B cell (primary cell): ENCODE measurements at regions of chr19 and their contacts with region 1.

Region 1: DNA sequence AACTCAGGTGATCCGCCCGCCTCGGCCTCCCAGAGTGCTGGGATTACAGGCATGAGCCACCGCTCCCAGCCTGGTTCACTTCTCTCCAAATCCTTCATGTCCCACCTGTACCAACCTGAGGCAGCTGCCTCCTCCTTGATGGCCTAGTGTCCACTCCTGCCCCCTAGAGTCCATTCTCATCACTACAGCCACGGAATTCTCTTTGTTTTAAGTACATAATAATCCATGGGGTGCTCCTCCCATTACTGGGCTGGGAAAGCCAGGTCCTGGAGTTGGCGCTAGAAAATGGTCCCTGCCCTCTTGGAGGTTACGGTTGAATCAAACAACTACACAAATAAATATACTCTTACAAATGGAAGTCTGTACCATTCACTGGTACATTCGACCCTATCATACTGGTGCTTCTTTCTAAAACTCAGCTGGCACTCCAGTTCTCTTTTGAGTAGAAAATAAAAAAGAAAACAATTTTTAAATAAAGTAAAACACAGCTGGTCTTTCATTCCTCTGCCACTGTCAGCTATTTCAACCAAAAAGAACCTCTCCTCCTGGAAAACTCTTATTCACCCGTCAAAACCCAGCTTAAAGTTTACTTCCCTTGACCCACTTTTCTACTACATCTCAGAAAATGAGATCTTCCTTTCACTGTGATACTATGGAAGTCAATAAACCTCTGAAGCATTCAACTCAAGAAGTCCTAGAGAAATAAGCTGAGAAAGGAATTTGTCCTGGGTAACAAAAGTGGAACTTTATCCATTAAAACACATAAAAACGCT is 22.4 kb upstream of the ARHGEF18 start:
- DNase-seq: peak; percentile 51
- ATAC-seq: no peak
- H3K4me3 ChIP-seq: no peak overlapping the region
- H3K4me3 Mint-ChIP-seq: no peak overlapping the region
- H3K27ac ChIP-seq: no peak overlapping the region
- H3K27ac Mint-ChIP-seq: no peak overlapping the region
- H3K4me1 ChIP-seq: peaks cover 8% of the 10 kb centered on the region in 2 donors
- H3K4me1 Mint-ChIP-seq: peaks cover 5% of the 10 kb centered on the region
- H3K27me3 ChIP-seq: no peaks in the 10 kb centered on the region
- H3K27me3 Mint-ChIP-seq: no peaks in the 10 kb centered on the region
- CTCF ChIP-seq: peak; percentile 22

Region 2: DNA sequence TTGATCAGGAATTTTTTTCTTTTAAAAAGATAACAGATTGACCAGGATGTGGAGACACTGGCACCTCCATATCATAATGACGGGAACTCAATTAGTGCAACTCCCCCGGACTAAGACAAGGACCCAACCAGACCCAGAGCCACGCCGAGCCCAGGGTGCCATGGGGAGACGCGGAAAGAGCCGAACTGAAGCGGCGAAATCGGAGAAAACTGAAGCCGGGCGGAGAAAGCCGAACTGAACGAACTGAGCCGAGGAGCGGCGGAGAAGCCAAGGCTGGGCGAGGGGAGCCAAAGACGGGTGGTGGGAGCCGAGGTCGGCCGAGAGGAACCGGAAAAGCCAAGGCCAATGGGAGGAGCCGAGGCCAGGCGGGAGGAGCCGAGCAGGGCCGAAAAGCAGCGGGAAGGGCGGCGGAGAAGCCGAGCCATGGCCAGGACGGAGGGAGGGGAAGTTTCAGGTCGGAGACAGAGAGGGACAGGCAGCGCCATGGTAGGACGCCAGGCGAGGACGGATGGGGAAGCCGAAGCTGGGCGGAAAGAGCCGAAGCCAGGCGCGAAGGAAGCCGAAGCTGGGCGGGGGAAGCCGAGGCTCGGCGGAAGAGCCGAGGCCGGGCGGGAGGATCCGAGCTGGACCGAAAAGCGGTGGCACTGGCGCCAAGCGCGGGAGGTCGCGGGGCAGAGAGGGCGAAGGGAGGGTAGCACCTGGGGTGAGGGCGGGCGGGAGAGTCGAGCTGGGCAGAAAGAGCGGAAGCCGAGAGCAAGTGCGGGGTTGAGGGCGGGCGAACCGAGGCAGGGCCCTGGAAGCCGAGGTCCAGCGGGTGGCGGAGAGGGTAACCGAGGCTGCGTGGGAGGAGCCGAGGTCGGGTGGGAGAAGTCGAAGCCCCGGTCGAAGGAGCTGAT is 227.3 kb before region 1 on chr19:
- CTCF ChIA-PET with region 1: interaction called, 15 read pairs
- POLR2A ChIA-PET with region 1: no interaction called
- intact Hi-C with region 1: no loop called
- DNase-seq: peak; percentile 91
- ATAC-seq: peak; percentile 91
- H3K4me3 ChIP-seq: peak overlapping the region; percentile 46 to 87 (median 82)
- H3K4me3 Mint-ChIP-seq: peak overlapping the region; percentile 93
- H3K27ac ChIP-seq: peak overlapping the region; percentile 76 to 93
- H3K27ac Mint-ChIP-seq: peak overlapping the region; percentile 90
- H3K4me1 ChIP-seq: peaks cover 10 to 14% of the 10 kb centered on the region in 2 donors
- H3K4me1 Mint-ChIP-seq: peaks cover 23% of the 10 kb centered on the region
- H3K27me3 ChIP-seq: no peaks in the 10 kb centered on the region
- H3K27me3 Mint-ChIP-seq: no peaks in the 10 kb centered on the region
- CTCF ChIP-seq: no peak

Region 3: GRCh38 chr19:7348587-7349230 is 22.4 kb after region 1 on chr19 and contains the start of gene ARHGEF18:
- CTCF ChIA-PET with region 1: interaction called, 52 read pairs
- POLR2A ChIA-PET with region 1: interaction called, 5 read pairs
- intact Hi-C with region 1: no loop called
- DNase-seq: peak; percentile 89
- ATAC-seq: peak; percentile 41
- H3K4me3 ChIP-seq: peak within 1 kb of the TSS; percentile 66 to 100 (median 97)
- H3K4me3 Mint-ChIP-seq: peak within 1 kb of the TSS; percentile 99
- H3K27ac ChIP-seq: peak within 1 kb of the TSS; percentile 96 to 99
- H3K27ac Mint-ChIP-seq: peak within 1 kb of the TSS; percentile 97
- H3K4me1 ChIP-seq: peaks cover 61 to 80% of the 10 kb centered on the region in 2 donors
- H3K4me1 Mint-ChIP-seq: peaks cover 79% of the 10 kb centered on the region
- H3K27me3 ChIP-seq: no peaks in the 10 kb centered on the region
- H3K27me3 Mint-ChIP-seq: no peaks in the 10 kb centered on the region
- CTCF ChIP-seq: no peak
- total RNA-seq, gene ARHGEF18: 86.8 and 94.9 TPM in 2 replicates

Region 4: DNA sequence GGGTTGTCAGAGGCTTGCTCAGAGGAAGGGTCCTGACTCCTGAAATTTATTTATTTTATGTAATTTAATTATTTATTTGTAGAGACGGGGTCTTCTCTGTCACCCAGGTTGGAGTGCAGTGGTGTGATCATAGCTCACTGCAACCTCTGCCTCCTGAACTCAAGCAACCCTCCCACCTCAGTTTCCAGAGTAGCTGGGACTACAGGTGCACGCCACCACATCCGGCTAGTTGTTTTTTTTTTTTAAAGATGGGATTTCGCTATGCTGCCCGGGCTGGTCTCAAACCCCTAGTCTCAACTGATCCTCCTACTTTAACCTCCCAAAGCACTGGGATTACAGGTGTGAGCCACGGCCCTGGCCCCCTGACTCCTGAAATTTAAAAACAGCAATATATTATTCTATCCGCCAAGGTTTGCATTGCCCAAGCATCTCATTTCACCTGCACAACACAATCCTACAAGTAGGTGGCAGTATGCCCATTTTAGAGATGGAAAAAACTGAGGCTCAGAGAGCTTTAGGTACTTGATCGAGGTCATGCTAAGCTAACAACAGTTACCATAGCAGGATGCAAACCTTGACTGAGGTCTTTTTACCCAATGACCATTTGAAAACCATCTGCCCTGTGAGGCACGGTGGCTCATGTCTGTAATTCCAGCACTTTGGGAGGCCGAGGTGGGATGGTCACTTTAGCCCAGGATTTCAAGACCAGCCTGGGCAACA is 40.6 kb after region 1 on chr19:
- CTCF ChIA-PET with region 1: interaction called, 17 read pairs
- POLR2A ChIA-PET with region 1: no interaction called
- intact Hi-C with region 1: no loop called
- DNase-seq: peak; percentile 47
- ATAC-seq: peak; percentile 57
- H3K4me3 ChIP-seq: no peak overlapping the region
- H3K4me3 Mint-ChIP-seq: no peak overlapping the region
- H3K27ac ChIP-seq: no peak overlapping the region
- H3K27ac Mint-ChIP-seq: peak overlapping the region; percentile 76
- H3K4me1 ChIP-seq: peaks cover 0 to 6% of the 10 kb centered on the region in 2 donors
- H3K4me1 Mint-ChIP-seq: peaks cover 31% of the 10 kb centered on the region
- H3K27me3 ChIP-seq: no peaks in the 10 kb centered on the region
- H3K27me3 Mint-ChIP-seq: no peaks in the 10 kb centered on the region
- CTCF ChIP-seq: peak; percentile 54

Region 5: DNA sequence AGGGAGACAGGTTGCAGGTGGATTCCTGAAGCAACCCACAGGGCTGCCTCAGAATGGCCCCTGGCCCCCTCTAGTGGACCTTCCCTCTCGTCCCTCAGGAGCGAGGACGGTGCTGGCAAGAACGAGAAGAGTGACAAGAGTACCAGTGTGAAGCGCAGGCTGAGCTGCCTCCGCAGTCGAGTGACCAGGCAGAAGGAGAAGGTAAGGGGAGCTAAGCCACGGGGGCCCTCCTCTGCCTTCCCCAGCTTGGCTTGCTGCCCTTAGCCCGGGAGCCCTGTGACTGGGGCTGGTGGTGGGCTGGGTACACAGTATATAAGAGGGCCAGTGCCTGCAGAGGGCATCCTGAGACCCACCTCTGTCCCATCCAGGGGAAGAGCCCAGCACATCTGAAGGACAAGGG is 56.4 kb after region 1 on chr19:
- CTCF ChIA-PET with region 1: interaction called, 53 read pairs
- POLR2A ChIA-PET with region 1: no interaction called
- intact Hi-C with region 1: loop called (anchors 1 kb)
- DNase-seq: no peak
- ATAC-seq: no peak
- H3K4me3 ChIP-seq: no peak overlapping the region
- H3K4me3 Mint-ChIP-seq: no peak overlapping the region
- H3K27ac ChIP-seq: peak overlapping the region in 1 of 2 donors; percentile 52
- H3K27ac Mint-ChIP-seq: peak overlapping the region; percentile 37
- H3K4me1 ChIP-seq: peaks cover 0 to 12% of the 10 kb centered on the region in 2 donors
- H3K4me1 Mint-ChIP-seq: peaks cover 20% of the 10 kb centered on the region
- H3K27me3 ChIP-seq: no peaks in the 10 kb centered on the region
- H3K27me3 Mint-ChIP-seq: no peaks in the 10 kb centered on the region
- CTCF ChIP-seq: no peak